Activated CD8-positive, alpha-beta T cell treated with anti-CD3 and anti-CD28 coated beads for 36 hours (primary cell): ENCODE measurements at regions of chr3 and their contacts with region 1.

Region 1: DNA sequence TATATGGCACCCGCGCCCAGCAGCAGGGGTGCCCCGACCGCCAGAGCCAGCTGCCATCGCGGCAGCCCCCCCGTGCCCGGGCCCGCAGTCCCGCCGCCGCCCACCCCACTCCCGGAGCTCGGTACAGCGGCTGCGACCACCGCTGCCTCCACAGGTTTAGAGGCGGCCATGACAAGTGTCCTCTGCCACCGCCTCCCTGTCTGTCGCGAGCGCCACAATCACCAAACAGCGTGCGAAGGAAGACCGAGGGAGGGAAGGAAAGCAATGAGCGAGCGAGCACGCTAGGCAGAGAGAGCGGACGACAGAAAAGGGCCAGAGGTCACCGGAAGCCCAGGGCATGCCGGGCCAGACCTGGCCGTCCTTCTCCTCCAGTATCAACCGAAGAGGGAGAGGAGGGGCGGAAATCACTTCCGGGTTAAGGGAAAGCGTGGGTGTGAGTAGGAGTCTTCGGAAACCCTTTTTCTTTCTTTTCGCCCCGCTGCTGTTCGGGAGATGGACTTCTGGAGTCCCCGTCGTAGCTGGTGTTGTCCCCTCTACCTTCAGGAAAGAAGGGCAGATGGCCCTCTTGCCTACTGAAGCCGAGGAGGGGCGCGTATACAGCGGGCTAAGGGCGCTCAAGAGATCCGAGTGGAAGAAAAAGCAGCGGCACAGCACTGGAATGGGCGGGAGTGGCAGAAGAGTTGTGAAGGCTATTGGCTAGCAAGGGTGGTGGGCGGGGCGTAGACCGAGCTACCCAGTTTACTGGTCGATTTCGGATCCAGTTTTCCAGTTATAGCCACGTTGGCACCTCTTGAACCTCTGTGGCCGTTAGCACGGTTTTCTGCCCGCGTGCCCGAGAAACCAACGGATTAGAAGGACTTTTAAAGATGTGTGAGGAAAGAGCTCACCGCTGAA is at the starts of genes LNP1 and TOMM70:
- DNase-seq: peak; percentile 99
- ATAC-seq: peak; percentile 91
- H3K4me3 Mint-ChIP-seq: peak within 1 kb of the TSS; percentile 84
- H3K27ac Mint-ChIP-seq: peak within 1 kb of the TSS; percentile 98
- H3K4me1 Mint-ChIP-seq: peaks cover 55% of the 10 kb centered on the region
- H3K27me3 Mint-ChIP-seq: no peaks in the 10 kb centered on the region
- CTCF ChIP-seq: no peak
- total RNA-seq, gene LNP1: 2.5 TPM
- total RNA-seq, gene TOMM70: 56.2 to 57.8 TPM

Region 2: DNA sequence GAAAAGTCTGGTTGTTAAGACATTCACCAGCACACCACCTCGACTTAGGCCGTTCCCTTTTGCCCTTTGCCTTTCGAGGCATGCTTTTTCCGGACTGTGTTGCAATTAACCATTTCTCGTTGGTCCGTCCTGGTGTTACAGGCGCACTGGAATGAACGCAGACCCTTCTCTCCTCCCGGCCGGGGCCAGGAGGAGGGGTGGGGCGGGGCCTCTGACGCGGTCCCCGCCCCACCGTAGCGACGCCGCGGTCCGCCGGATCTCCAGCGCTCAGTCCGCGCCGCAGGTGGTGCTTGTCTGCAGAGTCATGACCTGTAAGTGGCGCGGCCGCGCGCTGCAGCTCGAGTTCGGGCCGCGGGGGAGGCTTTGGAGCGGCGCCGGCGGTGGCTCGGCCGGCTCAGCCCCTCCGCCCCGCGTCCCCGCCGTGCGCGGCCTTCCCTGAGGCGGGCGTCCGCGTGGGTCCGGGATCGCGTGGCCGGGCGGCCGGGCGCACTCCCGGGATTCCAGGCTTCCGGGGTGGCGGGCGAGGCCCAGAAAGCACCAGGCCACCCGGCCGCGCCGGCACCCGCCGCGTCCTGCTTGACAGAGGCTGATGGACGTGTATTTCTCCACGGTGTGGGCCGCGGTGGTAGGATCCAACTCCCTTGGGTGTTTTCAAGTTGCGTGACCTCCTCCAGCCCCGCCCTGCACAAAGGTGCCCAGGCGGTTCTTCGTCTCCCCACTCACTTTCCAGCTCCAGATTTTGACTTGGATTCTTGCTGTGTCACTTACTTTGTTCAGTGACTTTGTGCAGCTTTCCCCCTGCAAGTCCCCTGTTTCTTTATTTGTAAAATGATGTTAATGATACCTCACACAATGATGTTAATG is 66.3 kb before region 1 on chr3 and contains the start of gene NIT2:
- CTCF ChIA-PET with region 1: interaction called, 3 read pairs
- POLR2A ChIA-PET with region 1: interaction called, 34 read pairs
- intact Hi-C with region 1: no loop called
- DNase-seq: peak; percentile 89
- ATAC-seq: peak; percentile 98
- H3K4me3 Mint-ChIP-seq: peak within 1 kb of the TSS; percentile 85
- H3K27ac Mint-ChIP-seq: peak within 1 kb of the TSS; percentile 93
- H3K4me1 Mint-ChIP-seq: peaks cover 15% of the 10 kb centered on the region
- H3K27me3 Mint-ChIP-seq: no peaks in the 10 kb centered on the region
- CTCF ChIP-seq: no peak
- total RNA-seq, gene NIT2: 64.2 TPM

Region 3: DNA sequence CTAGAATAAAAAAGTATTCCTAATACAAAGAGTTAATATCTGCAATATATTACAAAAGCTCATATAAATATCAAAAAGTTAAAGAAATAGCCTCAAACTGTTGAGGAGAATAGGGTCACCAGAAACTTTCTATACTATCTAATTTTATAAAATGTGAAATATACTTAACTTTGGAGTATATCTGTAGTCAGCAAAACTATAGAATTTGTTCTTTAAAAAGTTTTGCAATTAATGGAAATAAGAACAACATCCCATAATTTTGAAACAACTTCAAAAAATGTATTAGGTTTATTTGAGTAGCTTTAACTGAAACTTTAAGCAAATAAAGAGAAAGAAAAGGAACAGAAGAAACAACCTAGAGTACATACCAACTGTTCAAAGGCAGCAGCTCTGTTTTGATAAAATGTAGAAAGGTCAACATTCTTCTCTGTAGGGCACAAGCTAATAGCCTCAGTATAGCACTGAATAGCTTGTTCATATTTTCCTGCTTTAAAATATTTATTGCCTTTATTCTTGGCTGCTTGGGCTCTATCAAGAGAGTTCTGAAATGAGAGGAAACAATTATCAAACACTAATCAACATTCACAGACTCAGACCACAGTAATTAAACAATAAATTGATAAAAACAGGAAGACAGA is 14.5 kb before region 1 on chr3:
- CTCF ChIA-PET with region 1: interaction called, 3 read pairs
- POLR2A ChIA-PET with region 1: interaction called, 12 read pairs
- intact Hi-C with region 1: no loop called
- DNase-seq: no peak
- ATAC-seq: no peak
- H3K4me3 Mint-ChIP-seq: no peak overlapping the region
- H3K27ac Mint-ChIP-seq: no peak overlapping the region
- H3K4me1 Mint-ChIP-seq: peaks cover 20% of the 10 kb centered on the region
- H3K27me3 Mint-ChIP-seq: no peaks in the 10 kb centered on the region
- CTCF ChIP-seq: no peak

Region 4: DNA sequence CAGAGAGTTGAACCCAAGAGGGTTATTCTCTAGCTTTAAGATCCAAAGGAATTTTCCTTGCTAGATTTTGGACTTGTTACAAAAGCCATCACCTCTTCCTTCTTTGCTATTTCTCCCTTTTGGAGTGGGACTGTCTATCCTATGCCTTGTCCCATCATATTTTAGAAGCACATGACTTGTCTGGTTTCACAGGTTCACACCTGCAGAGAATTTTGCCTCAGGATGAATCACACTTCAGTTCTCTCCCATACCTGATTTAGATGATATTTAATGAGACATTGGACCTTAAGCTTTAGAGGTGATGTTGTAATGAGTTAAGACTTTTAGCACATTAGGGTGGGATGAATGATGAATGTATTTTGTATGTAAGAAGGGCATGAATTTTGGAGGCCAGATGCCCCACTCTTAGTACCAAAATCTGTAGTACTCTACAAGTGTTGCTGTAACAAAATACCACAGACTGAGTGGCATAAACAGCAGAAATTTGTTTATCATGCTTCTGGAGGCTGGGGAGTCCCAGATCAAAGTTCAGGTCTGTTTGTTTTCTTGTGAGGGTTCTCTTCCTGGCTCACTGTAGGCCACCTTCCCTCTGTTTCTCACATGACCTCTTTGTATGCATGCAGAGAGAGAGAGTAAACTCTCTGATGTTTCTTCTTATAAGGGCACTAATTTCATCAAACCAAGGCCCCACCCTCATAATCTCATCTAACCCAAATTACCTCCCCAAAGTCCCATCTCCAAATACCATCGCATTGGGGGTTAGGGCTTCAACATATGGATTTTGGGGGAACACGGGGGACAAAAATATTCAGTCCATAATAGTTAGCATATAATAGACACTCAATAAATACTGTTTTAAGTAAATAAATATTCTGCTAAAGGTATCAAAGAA is 10.3 kb after region 1 on chr3:
- CTCF ChIA-PET with region 1: no interaction called
- POLR2A ChIA-PET with region 1: interaction called, 16 read pairs
- intact Hi-C with region 1: no loop called
- DNase-seq: no peak
- ATAC-seq: no peak
- H3K4me3 Mint-ChIP-seq: no peak overlapping the region
- H3K27ac Mint-ChIP-seq: no peak overlapping the region
- H3K4me1 Mint-ChIP-seq: no peaks in the 10 kb centered on the region
- H3K27me3 Mint-ChIP-seq: no peaks in the 10 kb centered on the region
- CTCF ChIP-seq: no peak